Motor neuron (in vitro differentiated cells): ENCODE measurements at regions of chr22 and their contacts with region 1.

Region 1: DNA sequence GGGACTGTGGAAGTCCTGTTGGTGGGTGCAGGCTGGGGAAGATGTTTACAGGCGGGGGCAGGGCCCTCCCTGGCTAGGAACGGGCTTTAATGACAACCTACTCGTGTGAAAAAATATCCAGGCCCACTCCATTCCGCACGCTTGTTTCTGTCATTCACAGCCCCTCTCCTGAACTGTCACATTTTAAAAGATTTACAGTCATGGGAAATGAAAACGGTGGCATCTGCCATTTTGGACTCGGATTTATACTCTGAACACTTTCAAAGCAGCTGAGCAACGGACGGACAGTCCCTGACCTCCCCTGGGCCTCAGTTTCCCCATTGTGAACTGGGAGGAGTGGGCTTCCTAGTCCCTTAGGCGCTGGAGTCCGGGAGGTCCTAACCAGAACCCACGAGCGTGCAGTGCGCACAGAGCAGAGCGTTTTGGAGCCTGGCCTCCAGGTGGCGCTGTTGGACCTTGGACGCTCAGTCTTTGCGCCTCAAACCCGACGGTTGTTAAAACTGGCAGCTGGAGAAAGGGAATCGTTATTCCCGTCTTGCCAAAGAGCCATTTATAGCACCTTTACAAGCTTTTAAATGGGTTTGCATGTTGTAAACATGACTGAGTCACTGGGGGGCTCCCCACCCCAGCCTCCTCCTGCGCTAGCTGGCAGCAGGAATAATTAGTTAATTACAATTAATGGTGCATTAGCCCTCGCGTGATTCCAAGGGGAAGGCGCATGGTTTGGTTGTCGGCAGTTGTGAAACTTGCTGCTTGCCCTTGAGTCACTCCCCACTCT is 75.3 kb downstream of the FBLN1 start:
- ATAC-seq: peak; percentile 83 to 97 (median 91)
- H3K4me3 ChIP-seq: no peak overlapping the region
- H3K27ac ChIP-seq: no peak overlapping the region
- H3K4me1 ChIP-seq: peaks cover 2 to 10% of the 10 kb centered on the region in 2 donors

Region 2: DNA sequence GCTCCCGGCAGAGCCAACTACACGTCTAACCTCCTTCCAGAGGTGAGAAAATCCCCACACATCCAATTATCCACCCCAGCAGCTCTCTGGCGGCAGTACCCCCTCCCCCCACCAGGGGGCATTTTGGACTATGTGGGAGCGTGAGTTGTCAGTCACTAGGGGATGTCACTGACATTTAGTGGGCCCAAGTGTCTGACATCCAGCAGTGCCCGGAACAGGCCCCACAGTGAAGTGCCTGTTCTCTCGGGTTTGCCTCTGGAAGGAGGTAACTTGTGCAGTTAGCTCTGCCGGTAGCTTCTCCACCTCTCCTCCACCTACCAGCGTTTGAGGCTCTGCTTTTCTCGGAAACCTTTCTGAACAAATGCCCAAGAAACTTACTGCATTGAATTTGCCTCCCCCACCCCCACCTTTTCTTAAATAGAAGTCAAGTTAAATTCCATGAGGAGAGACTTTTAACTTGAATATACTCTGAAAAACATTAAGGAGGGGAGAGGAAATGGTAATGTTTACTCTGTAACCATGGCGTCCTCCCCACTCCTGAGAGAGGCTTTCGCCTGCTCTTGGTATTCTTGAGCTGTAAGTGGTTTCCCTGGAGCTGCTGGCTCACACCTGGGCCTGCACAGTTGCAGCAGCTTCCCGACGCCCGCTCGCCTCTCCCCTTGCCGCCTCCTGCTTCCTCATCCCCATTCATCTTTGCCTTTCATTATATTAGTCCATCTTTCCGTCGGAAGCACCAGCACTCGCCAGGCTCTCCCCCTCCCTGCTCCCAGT is 286.2 kb after region 1 on chr22:
- in situ Hi-C with region 1: loop called in 1 of 9 experiments (anchors 25 kb)
- ATAC-seq: peak; percentile 42 to 94 (median 64)
- H3K4me3 ChIP-seq: no peak overlapping the region
- H3K27ac ChIP-seq: no peak overlapping the region
- H3K4me1 ChIP-seq: peaks cover 15 to 31% of the 10 kb centered on the region in 2 donors

Region 3: DNA sequence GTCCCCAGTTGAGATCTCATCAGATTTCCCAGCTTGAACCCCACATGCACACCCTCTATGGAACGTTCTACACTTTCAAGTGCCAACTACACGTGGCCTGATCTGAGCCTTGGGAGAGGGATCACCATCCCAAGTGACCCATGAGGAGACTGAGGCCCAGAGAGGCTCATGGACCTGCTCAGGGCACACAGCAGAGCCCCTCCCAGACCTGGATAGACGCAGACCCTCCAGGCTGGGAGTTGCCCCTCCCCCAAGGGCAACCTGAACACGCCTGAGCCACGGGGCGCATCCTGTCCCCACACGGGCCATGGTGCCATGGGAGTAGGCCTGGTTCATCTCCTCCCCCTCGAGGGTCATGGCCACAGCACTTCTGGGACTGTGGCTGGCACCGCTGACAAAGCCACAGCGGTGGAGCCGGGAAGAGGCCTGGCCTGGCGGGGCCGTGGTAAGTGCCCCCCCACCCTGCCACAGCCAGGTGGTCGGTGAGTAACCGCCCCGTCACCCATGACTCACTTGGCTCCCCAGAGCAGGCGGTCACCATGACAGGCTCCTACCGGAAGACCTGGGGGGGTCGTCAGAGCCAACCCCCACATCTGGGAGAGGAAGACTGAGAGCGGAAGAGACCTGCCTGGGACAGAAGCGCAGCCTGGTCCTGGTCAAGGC is 390.9 kb after region 1 on chr22:
- in situ Hi-C with region 1: loop called in 1 of 9 experiments (anchors 25 kb)
- ATAC-seq: no peak
- H3K4me3 ChIP-seq: no peak overlapping the region
- H3K27ac ChIP-seq: no peak overlapping the region
- H3K4me1 ChIP-seq: peaks cover 7 to 14% of the 10 kb centered on the region in 2 donors

Region 4: GRCh38 chr22:45984316-45984916 is 406.5 kb after region 1 on chr22:
- in situ Hi-C with region 1: loop called in 4 of 9 experiments (anchors 10 kb)
- ATAC-seq: no peak
- H3K4me3 ChIP-seq: no peak overlapping the region
- H3K27ac ChIP-seq: no peak overlapping the region
- H3K4me1 ChIP-seq: no peaks in the 10 kb centered on the region

Region 5: GRCh38 chr22:46303347-46303965 is 725.5 kb after region 1 on chr22:
- in situ Hi-C with region 1: loop called in 1 of 9 experiments (anchors 25 kb)
- ATAC-seq: no peak
- H3K4me3 ChIP-seq: no peak overlapping the region
- H3K27ac ChIP-seq: no peak overlapping the region
- H3K4me1 ChIP-seq: no peaks in the 10 kb centered on the region